PC-9 (cell line): ENCODE measurements at regions of chr7 and their contacts with region 1.

Region 1: DNA sequence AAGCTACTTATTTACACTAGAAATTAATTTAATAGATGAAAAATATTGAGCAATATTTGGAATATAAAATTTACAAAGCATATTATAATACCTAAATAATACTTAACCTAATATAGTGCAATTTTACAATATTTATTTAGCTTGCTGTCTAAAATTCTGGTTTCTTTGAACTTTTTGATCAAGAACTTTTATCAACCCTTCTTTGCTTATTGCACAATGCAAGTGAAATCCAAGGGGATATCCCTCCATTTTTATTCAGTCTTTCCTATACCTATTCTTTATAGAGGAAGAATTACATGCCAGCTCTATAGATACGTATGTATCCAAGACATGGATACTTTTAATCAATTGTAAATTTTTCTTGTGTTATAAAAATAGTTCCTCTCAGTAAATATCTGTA is 28.3 kb downstream of the STEAP4 start:
- DNase-seq: no peak
- H3K4me3 ChIP-seq: no peak overlapping the region
- H3K27ac ChIP-seq: peak overlapping the region; percentile 88
- H3K4me1 ChIP-seq: peaks cover 28% of the 10 kb centered on the region
- H3K27me3 ChIP-seq: no peaks in the 10 kb centered on the region
- CTCF ChIP-seq: no peak

Region 2: DNA sequence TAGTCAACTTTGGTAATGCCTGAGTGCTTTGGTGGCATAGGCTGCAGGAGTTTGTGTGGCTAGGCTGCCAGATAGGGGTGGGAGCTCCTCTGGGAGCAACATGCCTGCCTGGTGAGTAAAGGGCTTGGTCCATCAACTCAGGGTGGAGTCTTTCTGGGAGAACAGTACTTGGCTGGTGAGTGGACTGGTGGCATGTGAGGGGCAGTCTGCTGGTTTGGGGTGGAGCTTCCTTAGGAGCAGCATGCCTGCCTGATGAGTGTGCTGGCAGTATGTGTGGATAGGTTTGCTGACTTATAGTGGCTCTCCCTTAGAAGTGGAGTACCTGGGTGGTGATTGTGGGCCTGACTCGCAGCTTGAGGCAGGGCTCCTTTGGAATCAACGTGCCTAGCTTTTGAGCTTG is 23.7 kb before region 1 on chr7:
- CTCF ChIA-PET with region 1: interaction called, 10 read pairs
- POLR2A ChIA-PET with region 1: interaction called, 3 read pairs
- intact Hi-C with region 1: no loop called
- DNase-seq: peak; percentile 89 to 95
- H3K4me3 ChIP-seq: peak overlapping the region; percentile 23; the same call in 1 of the 2 replicates
- H3K27ac ChIP-seq: peak overlapping the region; percentile 88
- H3K4me1 ChIP-seq: peaks cover 56% of the 10 kb centered on the region
- H3K27me3 ChIP-seq: no peaks in the 10 kb centered on the region
- CTCF ChIP-seq: no peak

Region 3: DNA sequence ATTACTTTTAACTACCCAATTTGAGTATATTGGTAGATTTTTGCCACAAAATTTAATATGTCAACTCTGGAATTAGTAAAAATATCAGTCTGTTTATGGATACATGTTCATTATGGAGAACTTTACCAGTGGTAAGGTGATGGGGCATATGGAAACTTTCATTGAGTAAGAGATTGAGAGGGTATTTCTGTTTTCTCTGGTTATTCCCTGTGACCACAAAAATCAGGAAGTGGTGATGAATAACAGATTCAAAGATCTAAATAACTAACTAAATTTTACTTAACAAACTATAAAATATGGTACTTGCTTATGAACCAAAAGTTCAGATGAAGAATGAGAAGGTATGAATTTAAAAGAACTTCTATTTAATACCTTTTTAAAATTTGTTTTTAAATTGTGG is 50.4 kb after region 1 on chr7:
- CTCF ChIA-PET with region 1: no interaction called
- POLR2A ChIA-PET with region 1: no interaction called
- intact Hi-C with region 1: no loop called
- DNase-seq: no peak
- H3K4me3 ChIP-seq: no peak overlapping the region
- H3K27ac ChIP-seq: no peak overlapping the region
- H3K4me1 ChIP-seq: no peaks in the 10 kb centered on the region
- H3K27me3 ChIP-seq: no peaks in the 10 kb centered on the region
- CTCF ChIP-seq: no peak

Region 4: GRCh38 chr7:88576720-88577119 is 298.3 kb after region 1 on chr7:
- CTCF ChIA-PET with region 1: no interaction called
- POLR2A ChIA-PET with region 1: no interaction called
- intact Hi-C with region 1: no loop called
- DNase-seq: no peak
- H3K4me3 ChIP-seq: no peak overlapping the region
- H3K27ac ChIP-seq: no peak overlapping the region
- H3K4me1 ChIP-seq: no peaks in the 10 kb centered on the region
- H3K27me3 ChIP-seq: no peaks in the 10 kb centered on the region
- CTCF ChIP-seq: no peak